Activated CD4-positive, alpha-beta T cell treated with anti-CD3 and anti-CD28 coated beads, Interleukin-2, amount 10 ng/mL, durations not matched to agents 24 days and 14 days (primary cell): ENCODE measurements at regions of chr19 and their contacts with region 1.

Region 1: GRCh38 chr19:18919086-18919899 is at the starts of genes COPE and DDX49:
- DNase-seq: peak; percentile 99
- H3K4me3 Mint-ChIP-seq: peak within 1 kb of the TSS; percentile 96
- H3K27ac Mint-ChIP-seq: peak within 1 kb of the TSS; percentile 92
- H3K4me1 Mint-ChIP-seq: peaks cover 29% of the 10 kb centered on the region
- H3K27me3 Mint-ChIP-seq: no peaks in the 10 kb centered on the region
- total RNA-seq, gene COPE: 206 and 231 TPM in 2 replicates
- total RNA-seq, gene DDX49: 93.2 and 94.9 TPM in 2 replicates

Region 2: DNA sequence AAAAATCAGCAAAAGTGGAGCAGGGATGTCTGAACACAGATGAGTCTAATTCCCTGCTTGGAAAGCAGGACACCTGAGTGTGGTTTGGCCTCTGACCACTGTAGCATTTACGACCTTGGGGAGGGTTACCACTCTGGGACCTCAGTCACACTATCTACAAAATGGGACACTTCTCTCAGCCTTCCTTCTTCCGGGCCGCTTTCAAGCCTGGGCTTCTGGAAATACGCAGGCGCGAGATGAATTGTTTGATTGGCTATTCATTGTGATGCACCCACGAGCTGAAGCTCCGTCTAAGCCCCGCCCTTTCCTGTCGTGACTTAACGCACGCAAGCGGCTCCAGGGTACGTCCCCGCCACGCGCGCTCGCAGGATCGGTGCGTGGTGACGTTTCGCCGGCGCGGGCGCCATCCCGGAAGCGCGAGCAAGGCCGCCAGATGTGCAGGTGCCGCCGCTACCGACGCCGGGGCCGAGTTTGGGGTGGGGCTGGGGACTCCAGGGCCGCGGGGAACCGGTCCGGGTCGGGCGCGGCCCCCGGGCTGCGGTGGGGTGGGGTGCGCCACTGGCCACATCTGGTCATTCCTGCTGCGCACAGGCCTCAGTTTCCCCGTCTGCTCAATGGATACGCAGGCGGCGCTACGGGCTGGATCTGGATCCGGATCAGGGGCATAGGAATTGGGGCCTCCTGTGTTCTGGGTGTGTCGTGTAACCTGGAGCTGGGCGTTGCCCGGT is 361.7 kb before region 1 on chr19 and contains the start of gene KXD1:
- intact Hi-C with region 1: loop called (anchors 5 kb)
- DNase-seq: peak; percentile 99
- H3K4me3 Mint-ChIP-seq: peak within 1 kb of the TSS; percentile 97
- H3K27ac Mint-ChIP-seq: peak within 1 kb of the TSS; percentile 93
- H3K4me1 Mint-ChIP-seq: peaks cover 18% of the 10 kb centered on the region
- H3K27me3 Mint-ChIP-seq: no peaks in the 10 kb centered on the region
- total RNA-seq, gene KXD1: 124 and 134 TPM in 2 replicates

Region 3: DNA sequence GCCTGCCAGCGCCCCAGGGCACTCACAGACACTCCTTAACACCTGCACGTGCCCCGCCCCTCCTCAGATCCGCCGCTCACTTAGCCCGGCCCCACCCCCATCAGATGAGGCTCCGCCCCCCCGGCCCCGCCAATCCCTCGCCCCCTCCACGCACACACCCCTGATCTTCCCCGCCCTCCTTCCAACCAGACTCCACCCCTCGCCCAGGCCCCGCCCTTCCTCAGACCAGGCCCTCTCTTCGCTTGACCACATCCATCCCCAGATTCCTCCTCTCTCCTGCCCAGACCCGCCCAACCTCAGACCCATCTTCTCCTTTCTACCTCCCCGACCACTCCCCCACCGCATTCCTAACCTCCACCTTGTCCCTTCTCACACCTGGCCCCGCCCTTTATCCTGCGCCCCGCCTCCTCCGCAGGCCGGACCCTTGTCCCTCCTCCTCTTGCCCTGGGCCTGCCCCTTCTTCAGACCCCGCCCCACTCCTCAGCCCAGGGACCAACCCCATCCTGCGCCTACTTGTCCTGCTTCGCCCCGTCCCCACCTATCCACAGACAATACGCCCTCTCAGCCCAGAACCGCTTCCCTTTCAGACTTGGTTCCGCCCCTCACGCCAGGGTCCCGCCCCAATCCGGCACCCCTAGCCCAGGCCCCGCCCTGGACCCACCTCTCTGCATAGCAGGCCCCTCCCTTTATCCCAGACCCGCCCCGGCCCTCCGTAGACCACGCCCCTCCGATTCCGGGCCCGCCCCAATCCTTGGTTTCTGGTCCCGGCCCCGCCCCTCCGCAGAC is 282.9 kb before region 1 on chr19:
- intact Hi-C with region 1: loop called (anchors 1 kb)
- DNase-seq: peak; percentile 100
- H3K4me3 Mint-ChIP-seq: peak overlapping the region; percentile 99
- H3K27ac Mint-ChIP-seq: peak overlapping the region; percentile 93
- H3K4me1 Mint-ChIP-seq: peaks cover 22% of the 10 kb centered on the region
- H3K27me3 Mint-ChIP-seq: peaks cover 9% of the 10 kb centered on the region

Region 4: DNA sequence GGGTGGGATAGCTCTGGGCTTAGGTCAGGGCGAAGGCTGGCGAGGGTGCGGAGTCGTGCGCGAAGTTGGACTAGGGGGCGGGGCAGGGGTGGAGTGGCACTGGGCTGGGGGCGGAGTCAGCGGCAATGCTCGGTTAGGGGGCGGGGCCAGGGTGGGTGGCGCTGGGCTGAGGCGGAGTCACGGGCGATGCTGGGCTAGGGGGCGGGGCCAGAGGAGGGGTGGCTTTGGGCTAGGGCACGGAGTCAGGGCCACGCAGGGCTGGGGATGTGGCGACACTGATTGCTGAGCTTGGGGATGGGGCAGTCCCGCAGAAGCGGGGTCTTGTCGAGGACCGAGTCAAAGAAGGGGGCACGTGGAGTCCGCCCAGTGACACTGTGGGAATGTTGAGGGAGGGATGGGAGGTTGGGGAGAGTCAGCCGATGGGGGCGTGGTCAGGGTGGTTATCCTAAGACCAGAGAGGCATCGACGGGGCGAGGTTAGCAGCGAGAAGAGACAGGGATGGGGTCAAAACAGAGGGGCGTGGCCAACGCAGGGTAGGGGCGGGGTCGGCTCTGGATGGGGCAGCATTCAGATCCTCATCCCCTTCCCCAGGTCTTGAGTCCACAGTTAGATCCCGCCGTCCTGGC is 13.0 kb after region 1 on chr19:
- intact Hi-C with region 1: loop called (anchors 1 kb)
- DNase-seq: peak; percentile 92
- H3K4me3 Mint-ChIP-seq: peak overlapping the region; percentile 85
- H3K27ac Mint-ChIP-seq: peak overlapping the region; percentile 64
- H3K4me1 Mint-ChIP-seq: peaks cover 5% of the 10 kb centered on the region
- H3K27me3 Mint-ChIP-seq: peaks cover 13% of the 10 kb centered on the region

Region 5: DNA sequence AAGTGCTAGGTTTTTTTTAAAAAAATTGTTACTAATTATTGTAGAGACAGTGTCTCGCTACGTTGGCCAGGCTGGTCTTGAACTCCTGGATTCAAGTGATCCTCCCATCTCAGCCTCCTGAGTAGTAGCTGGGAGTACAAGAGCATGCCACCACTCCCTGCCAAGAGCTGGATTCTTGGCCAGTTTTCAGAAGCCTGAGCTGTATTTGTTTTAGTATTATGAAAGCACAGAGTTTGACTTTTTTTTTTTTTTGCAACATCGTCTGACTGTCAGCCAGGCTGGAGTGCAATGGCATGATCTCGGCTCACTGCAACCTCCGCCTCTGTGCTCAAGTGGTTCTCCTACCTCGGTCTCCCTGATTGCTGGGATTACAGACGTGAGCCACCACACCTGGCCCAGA is 121.1 kb after region 1 on chr19:
- intact Hi-C with region 1: no loop called
- DNase-seq: no peak
- H3K4me3 Mint-ChIP-seq: no peak overlapping the region
- H3K27ac Mint-ChIP-seq: no peak overlapping the region
- H3K4me1 Mint-ChIP-seq: peaks cover 23% of the 10 kb centered on the region
- H3K27me3 Mint-ChIP-seq: no peaks in the 10 kb centered on the region

Region 6: DNA sequence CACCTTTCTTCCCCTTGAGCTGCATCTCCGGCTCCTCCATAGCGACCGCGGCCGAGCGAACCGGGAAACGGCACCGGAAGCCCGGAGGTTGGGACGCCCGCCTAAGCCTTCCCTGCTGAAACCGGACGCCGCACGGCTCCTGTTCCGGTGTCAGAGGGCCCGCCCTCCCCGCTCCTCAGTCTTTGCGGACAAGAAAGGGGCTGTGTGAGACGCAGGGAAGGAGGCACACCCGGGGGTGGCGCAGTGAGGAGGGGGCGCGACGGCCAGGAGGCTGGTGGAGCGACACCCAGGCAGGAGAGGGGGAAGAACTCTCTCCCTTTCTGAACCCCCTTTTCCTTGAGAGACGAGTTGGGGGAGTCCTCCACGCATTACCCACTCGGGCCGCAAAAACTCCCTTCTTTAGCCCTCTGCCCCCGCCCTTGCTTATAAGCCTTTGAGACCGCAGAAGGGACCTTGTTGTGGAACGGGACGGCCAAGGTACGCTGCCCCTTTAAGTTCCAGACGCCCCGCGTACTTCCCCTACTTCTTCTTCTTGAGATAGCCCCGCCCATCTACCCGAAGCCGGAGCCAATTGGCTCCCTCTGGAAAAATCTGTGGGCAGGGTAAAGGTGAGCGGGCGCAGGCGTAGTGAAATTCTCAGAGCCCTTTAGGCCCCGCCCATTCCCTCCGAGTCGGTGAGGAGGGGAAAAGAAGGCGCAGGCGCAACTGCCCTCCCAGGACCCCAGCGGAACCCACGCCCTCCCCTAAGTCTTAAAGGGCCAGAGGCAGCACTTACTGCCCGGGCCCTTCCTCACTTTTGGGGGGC is 273.0 kb after region 1 on chr19 and contains the starts of genes BORCS8 and RFXANK:
- intact Hi-C with region 1: loop called (anchors 1 kb)
- DNase-seq: peak; percentile 100
- H3K4me3 Mint-ChIP-seq: peak within 1 kb of the TSS; percentile 99
- H3K27ac Mint-ChIP-seq: peak within 1 kb of the TSS; percentile 98
- H3K4me1 Mint-ChIP-seq: peaks cover 32% of the 10 kb centered on the region
- H3K27me3 Mint-ChIP-seq: no peaks in the 10 kb centered on the region
- total RNA-seq, gene BORCS8: 34.8 and 38.9 TPM in 2 replicates
- total RNA-seq, gene RFXANK: 111 and 113 TPM in 2 replicates